CD4-positive, alpha-beta T cell (primary cell): ENCODE measurements at regions of chr3 and their contacts with region 1.

Region 1: DNA sequence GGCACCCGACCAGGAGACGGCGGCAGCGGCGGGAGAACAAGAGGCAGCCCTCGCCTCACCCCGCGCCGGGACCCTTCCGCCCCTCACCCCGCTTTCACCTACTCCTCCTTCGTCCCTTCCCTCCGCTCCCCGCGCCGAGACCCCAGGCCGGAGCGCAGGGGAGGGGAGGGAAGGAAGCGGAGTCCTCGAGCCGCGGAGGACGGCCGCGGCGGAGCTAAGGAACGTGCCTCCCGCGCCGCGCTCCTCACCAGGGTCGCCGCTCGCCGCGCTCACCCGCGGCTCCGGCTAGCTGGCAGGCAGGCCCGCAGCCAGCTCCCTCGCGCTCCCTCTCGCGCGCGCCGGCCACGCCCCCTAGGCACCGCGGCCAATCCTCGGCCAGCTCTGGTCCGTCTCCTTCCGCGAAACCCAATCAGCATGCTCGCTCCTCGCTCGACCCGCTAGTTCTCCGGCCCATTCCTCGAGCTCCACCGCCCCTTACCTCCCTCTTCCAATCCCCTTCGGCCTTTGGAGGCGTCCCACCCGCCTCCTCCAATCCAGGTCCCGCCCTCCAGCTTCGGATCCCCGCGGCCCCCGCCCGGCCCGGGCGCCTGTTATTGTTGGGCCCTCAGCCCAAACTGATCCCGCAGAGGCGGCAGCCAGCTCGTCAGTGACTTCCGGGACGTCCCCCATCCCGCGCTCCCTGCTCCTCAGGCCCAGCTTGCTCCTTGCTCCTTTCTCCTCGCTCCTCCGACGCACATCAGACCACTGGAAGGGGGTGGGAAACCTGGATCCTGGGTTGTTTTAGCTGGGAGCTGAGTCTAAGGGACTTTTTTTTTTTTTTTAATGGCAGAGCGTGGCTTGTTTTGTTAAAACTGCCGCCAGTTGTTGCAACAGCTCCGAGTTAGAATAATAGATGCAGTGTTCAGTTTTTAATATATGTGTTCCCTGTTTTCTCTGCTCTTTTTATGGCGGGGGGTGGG is at the start of gene DCBLD2:
- DNase-seq: peak; percentile 79 to 96 (median 88)
- ATAC-seq: peak; percentile 98
- H3K4me3 ChIP-seq: peak within 1 kb of the TSS; percentile 67
- H3K4me3 Mint-ChIP-seq: peak within 1 kb of the TSS; percentile 93
- H3K27ac ChIP-seq: peak within 1 kb of the TSS in 1 of 2 donors; percentile 45
- H3K27ac Mint-ChIP-seq: peak within 1 kb of the TSS; percentile 76
- H3K4me1 ChIP-seq: peaks cover 13% of the 10 kb centered on the region
- H3K4me1 Mint-ChIP-seq: peaks cover 26% of the 10 kb centered on the region
- H3K27me3 ChIP-seq: peaks cover 0 to 2% of the 10 kb centered on the region in 2 experiments
- H3K27me3 Mint-ChIP-seq: peaks cover 12% of the 10 kb centered on the region
- CTCF ChIP-seq: no peak
- total RNA-seq, gene DCBLD2: 2.2 to 2.5 TPM

Region 2: GRCh38 chr3:98032904-98033303 is 868.8 kb before region 1 on chr3:
- CTCF ChIA-PET with region 1: no interaction called
- POLR2A ChIA-PET with region 1: no interaction called
- intact Hi-C with region 1: loop called in 1 of 2 experiments (anchors 5 kb)
- DNase-seq: no peak
- ATAC-seq: no peak
- H3K4me3 ChIP-seq: no peak overlapping the region
- H3K4me3 Mint-ChIP-seq: no peak overlapping the region
- H3K27ac ChIP-seq: no peak overlapping the region
- H3K27ac Mint-ChIP-seq: no peak overlapping the region
- H3K4me1 ChIP-seq: peaks cover 17% of the 10 kb centered on the region
- H3K4me1 Mint-ChIP-seq: peaks cover 16% of the 10 kb centered on the region
- H3K27me3 ChIP-seq: no peaks in the 10 kb centered on the region
- H3K27me3 Mint-ChIP-seq: peaks cover 7% of the 10 kb centered on the region
- CTCF ChIP-seq: no peak

Region 3: GRCh38 chr3:98680723-98681122 is 220.9 kb before region 1 on chr3:
- CTCF ChIA-PET with region 1: no interaction called
- POLR2A ChIA-PET with region 1: no interaction called
- intact Hi-C with region 1: no loop called
- DNase-seq: no peak
- ATAC-seq: no peak
- H3K4me3 ChIP-seq: no peak overlapping the region
- H3K4me3 Mint-ChIP-seq: no peak overlapping the region
- H3K27ac ChIP-seq: no peak overlapping the region
- H3K27ac Mint-ChIP-seq: no peak overlapping the region
- H3K4me1 ChIP-seq: no peaks in the 10 kb centered on the region
- H3K4me1 Mint-ChIP-seq: no peaks in the 10 kb centered on the region
- H3K27me3 ChIP-seq: no peaks in the 10 kb centered on the region
- H3K27me3 Mint-ChIP-seq: peaks cover 4% of the 10 kb centered on the region
- CTCF ChIP-seq: no peak

Region 4: GRCh38 chr3:100334488-100335351 is 1433.0 kb after region 1 on chr3 and contains the start of gene NIT2:
- CTCF ChIA-PET with region 1: no interaction called
- POLR2A ChIA-PET with region 1: no interaction called
- intact Hi-C with region 1: loop called in 1 of 2 experiments (anchors 10 kb)
- DNase-seq: peak; percentile 59 to 91 (median 74)
- ATAC-seq: peak; percentile 94
- H3K4me3 ChIP-seq: peak within 1 kb of the TSS; percentile 81
- H3K4me3 Mint-ChIP-seq: peak within 1 kb of the TSS; percentile 93
- H3K27ac ChIP-seq: peak within 1 kb of the TSS; percentile 29 to 70
- H3K27ac Mint-ChIP-seq: peak within 1 kb of the TSS; percentile 83
- H3K4me1 ChIP-seq: peaks cover 17% of the 10 kb centered on the region
- H3K4me1 Mint-ChIP-seq: peaks cover 30% of the 10 kb centered on the region
- H3K27me3 ChIP-seq: no peaks in the 10 kb centered on the region
- H3K27me3 Mint-ChIP-seq: no peaks in the 10 kb centered on the region
- CTCF ChIP-seq: no peak
- total RNA-seq, gene NIT2: 18.6 to 21.4 TPM